Endothelial cell of umbilical vein (primary cell): ENCODE measurements at regions of chr9 and their contacts with region 1.

Region 1: GRCh38 chr9:21434202-21435014 is 5.8 kb upstream of the IFNA1 start:
- DNase-seq: peak; percentile 68
- H3K4me3 ChIP-seq: no peak overlapping the region
- H3K27ac ChIP-seq: no peak overlapping the region
- H3K4me1 ChIP-seq: no peaks in the 10 kb centered on the region
- H3K27me3 ChIP-seq: peaks cover 22 to 56% of the 10 kb centered on the region in 2 experiments
- CTCF ChIP-seq: peak; percentile 41 to 59
- POLR2A ChIP-seq: no peak

Region 2: DNA sequence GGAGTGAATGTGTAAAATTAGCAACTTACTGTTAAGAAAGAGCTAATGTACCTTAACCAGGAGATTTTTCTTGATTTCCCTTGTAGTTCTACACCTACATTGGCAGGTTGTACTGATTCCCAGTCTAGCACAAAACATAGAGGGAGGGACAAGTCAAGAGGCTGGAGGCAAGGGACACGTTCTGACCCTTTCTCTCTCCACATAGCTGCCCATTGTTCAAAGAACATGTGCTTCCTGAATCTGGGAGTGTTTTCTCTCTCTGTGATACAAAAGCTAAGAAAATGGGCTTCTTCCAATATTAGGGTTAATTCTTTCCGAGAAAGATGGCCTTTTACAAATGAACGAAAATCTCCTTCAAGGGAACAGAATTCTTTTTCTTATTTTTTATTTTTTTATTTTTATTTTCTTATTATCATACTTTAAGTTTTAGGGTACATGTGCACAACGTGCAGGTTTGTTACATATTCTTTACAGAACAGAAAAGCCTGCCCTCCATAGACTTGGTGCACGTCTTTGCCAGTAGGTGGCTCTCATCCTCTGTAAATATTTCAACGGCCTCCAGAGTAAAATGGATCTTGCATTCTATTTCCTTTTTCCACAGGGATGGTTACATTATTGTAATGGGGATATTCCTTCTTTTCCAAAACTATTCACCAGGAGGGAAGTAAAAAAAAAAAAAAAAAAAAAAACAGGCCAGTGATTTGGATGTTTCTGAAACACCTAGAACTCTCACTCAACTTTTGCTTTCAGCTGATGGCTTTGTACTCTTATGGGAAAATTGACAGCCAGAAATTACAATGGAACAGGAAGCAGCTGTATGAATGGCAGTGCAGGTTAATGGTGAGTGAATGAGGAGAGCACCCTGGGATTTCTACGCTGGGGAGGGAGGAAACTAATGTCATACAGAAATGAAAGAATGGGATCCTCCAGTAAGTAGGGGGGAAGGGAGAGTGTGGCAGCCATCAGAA is 116.2 kb before region 1 on chr9:
- CTCF ChIA-PET with region 1: interaction called, 29 read pairs
- POLR2A ChIA-PET with region 1: no interaction called
- dilution Hi-C with region 1: no loop called
- intact Hi-C with region 1: loop called (anchors 5 kb)
- DNase-seq: peak; percentile 76
- H3K4me3 ChIP-seq: no peak overlapping the region
- H3K27ac ChIP-seq: peak overlapping the region; percentile 20
- H3K4me1 ChIP-seq: peaks cover 13% of the 10 kb centered on the region
- H3K27me3 ChIP-seq: peaks cover 10 to 22% of the 10 kb centered on the region in 2 experiments
- CTCF ChIP-seq: peak; percentile 37 to 61
- POLR2A ChIP-seq: no peak

Region 3: DNA sequence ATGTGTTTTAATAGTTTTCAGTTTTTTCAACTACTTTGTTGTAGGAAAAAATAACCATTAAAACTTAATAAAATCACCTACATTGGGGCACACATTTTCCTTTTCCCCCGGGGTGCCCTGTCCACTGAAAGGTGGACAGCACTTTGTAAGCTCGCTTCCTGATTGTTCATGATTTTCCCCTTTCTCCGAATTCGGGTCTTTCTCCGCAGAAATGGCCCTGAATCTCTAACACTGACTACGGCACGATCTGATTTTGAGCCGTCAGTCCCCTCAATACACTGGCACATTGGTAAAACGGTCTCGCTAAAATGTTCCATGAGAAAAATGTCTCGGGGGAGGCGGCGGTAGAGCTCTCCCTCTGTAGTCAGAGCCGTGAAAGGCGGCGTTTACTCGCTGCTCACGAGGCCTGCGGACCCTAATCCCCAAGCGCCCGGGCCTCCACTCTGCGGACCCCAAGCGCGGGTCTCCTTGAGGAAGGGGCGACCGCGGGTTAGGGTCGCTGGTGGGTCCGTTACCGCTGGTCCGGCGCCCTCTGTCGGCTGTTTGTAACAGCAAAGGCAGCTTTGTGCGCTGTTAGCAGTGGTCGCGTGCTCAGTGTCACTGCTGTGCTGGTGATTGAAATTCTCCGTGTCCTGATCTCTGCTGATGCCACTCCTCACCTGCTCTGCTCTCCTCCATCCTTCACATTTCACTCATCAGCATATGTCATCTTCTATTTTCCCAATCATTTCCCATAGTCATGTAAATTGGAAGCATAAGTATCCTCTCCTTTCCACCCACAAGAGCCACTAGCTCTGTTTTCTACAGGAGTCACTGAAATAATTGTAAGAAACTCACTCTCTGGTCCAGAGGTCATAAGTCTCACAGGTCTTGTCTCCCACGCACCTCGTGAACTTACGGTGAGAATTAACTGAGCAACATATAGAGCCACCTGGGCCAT is 38.4 kb before region 1 on chr9:
- CTCF ChIA-PET with region 1: interaction called, 31 read pairs
- POLR2A ChIA-PET with region 1: no interaction called
- dilution Hi-C with region 1: no loop called
- intact Hi-C with region 1: no loop called
- DNase-seq: peak; percentile 45
- H3K4me3 ChIP-seq: peak overlapping the region in 2 of 3 experiments; percentile 30 to 32
- H3K27ac ChIP-seq: no peak overlapping the region
- H3K4me1 ChIP-seq: no peaks in the 10 kb centered on the region
- H3K27me3 ChIP-seq: peaks cover 31 to 78% of the 10 kb centered on the region in 2 experiments
- CTCF ChIP-seq: peak; percentile 88 to 93
- POLR2A ChIP-seq: no peak

Region 4: GRCh38 chr9:21559424-21560280 is 125.2 kb after region 1 on chr9:
- CTCF ChIA-PET with region 1: interaction called, 10 read pairs
- POLR2A ChIA-PET with region 1: no interaction called
- dilution Hi-C with region 1: no loop called
- intact Hi-C with region 1: no loop called
- DNase-seq: peak; percentile 68
- H3K4me3 ChIP-seq: peak overlapping the region; percentile 78 to 97 (median 92)
- H3K27ac ChIP-seq: peak overlapping the region; percentile 81
- H3K4me1 ChIP-seq: peaks cover 24% of the 10 kb centered on the region
- H3K27me3 ChIP-seq: no peaks in the 10 kb centered on the region
- CTCF ChIP-seq: peak in 1 of 2 donors; percentile 14
- POLR2A ChIP-seq: peak; percentile 49

Region 5: DNA sequence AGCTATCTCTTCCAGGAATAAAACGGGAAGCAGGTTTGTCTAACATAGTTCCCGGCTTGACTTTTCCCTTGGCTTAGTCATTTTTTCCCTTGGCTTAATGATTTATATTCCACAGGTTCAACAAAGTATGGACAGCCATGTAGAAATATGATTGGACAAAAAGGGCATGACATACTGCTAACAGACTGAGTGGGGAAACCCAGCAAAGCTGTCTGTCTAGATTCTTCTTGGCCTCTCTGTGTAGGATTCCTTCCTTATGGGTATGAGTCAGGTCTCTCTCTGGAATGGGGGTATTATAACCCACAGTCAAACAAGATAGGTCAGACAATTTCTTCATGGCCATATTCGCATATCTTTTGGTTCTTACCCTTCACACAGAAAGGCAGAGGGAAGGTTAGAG is 362.4 kb after region 1 on chr9:
- CTCF ChIA-PET with region 1: interaction called, 14 read pairs
- POLR2A ChIA-PET with region 1: no interaction called
- dilution Hi-C with region 1: no loop called
- intact Hi-C with region 1: no loop called
- DNase-seq: no peak
- H3K4me3 ChIP-seq: no peak overlapping the region
- H3K27ac ChIP-seq: no peak overlapping the region
- H3K4me1 ChIP-seq: peaks cover 7% of the 10 kb centered on the region
- H3K27me3 ChIP-seq: peaks cover 17 to 33% of the 10 kb centered on the region in 2 experiments
- CTCF ChIP-seq: no peak
- POLR2A ChIP-seq: no peak